ENCODE measurements at regions of chr16 and their contacts with region 1.

Region 1: DNA sequence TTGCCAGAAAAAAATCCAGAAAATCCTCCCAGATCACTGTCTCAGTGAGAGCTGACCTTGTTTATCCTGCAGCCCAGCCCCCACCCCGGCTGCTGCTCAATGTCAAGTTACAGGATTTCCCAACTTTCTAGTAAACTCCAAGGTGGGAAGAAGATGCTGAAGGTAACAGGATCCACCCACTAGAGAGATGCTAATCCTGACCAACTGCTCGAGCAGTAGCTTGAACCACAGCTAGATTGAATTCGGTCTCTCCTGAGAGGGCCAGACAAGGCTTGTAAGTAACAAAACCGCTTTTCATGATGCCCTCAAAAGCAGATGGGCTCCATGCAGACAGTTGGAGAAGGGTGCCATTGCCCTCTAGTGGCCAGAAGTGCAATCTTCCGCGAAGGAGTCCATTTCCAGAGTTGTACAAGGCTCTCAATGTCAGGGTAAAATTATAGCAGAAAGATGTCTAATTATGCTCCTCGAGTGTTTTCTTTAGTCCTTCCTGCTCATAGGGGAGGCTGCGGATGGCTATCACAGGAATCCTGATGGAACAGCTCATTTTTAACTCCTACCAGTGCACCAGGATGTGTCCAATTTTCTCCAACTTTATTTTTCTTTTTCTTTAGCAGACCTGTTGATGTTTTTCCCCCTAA is 3.9 kb downstream of the CDH11 start:
- DNase-seq: peak; percentile 91
- H3K4me3 ChIP-seq: peak overlapping the region; percentile 79
- H3K27ac ChIP-seq: no peak overlapping the region
- H3K4me1 ChIP-seq: peaks cover 33% of the 10 kb centered on the region
- H3K27me3 ChIP-seq: no peaks in the 10 kb centered on the region
- CTCF ChIP-seq: peak; percentile 95

Region 2: GRCh38 chr16:63361032-63361624 is 1756.8 kb before region 1 on chr16:
- CTCF ChIA-PET with region 1: no interaction called
- POLR2A ChIA-PET with region 1: no interaction called
- intact Hi-C with region 1: loop called (anchors 10 kb)
- DNase-seq: peak; percentile 75
- H3K4me3 ChIP-seq: no peak overlapping the region
- H3K27ac ChIP-seq: no peak overlapping the region
- H3K4me1 ChIP-seq: peaks cover 12% of the 10 kb centered on the region
- H3K27me3 ChIP-seq: no peaks in the 10 kb centered on the region
- CTCF ChIP-seq: peak; percentile 89

Region 3: GRCh38 chr16:64089697-64090096 is 1028.2 kb before region 1 on chr16:
- CTCF ChIA-PET with region 1: no interaction called
- POLR2A ChIA-PET with region 1: no interaction called
- intact Hi-C with region 1: loop called (anchors 2 kb)
- DNase-seq: peak; percentile 59
- H3K4me3 ChIP-seq: no peak overlapping the region
- H3K27ac ChIP-seq: no peak overlapping the region
- H3K4me1 ChIP-seq: no peaks in the 10 kb centered on the region
- H3K27me3 ChIP-seq: no peaks in the 10 kb centered on the region
- CTCF ChIP-seq: peak; percentile 73

Region 4: GRCh38 chr16:64991001-64991400 is 126.9 kb before region 1 on chr16:
- CTCF ChIA-PET with region 1: no interaction called
- POLR2A ChIA-PET with region 1: no interaction called
- intact Hi-C with region 1: loop called (anchors 5 kb)
- DNase-seq: peak; percentile 54
- H3K4me3 ChIP-seq: no peak overlapping the region
- H3K27ac ChIP-seq: peak overlapping the region; percentile 66
- H3K4me1 ChIP-seq: peaks cover 65% of the 10 kb centered on the region
- H3K27me3 ChIP-seq: no peaks in the 10 kb centered on the region
- CTCF ChIP-seq: no peak

Region 5: GRCh38 chr16:65070831-65071432 is 47.0 kb before region 1 on chr16:
- CTCF ChIA-PET with region 1: no interaction called
- POLR2A ChIA-PET with region 1: no interaction called
- intact Hi-C with region 1: no loop called
- DNase-seq: peak; percentile 81
- H3K4me3 ChIP-seq: no peak overlapping the region
- H3K27ac ChIP-seq: no peak overlapping the region
- H3K4me1 ChIP-seq: peaks cover 44% of the 10 kb centered on the region
- H3K27me3 ChIP-seq: no peaks in the 10 kb centered on the region
- CTCF ChIP-seq: no peak

Region 6: GRCh38 chr16:65540901-65541300 is 423.0 kb after region 1 on chr16:
- CTCF ChIA-PET with region 1: no interaction called
- POLR2A ChIA-PET with region 1: no interaction called
- intact Hi-C with region 1: loop called (anchors 2 kb)
- DNase-seq: peak; percentile 10
- H3K4me3 ChIP-seq: no peak overlapping the region
- H3K27ac ChIP-seq: peak overlapping the region; percentile 96
- H3K4me1 ChIP-seq: peaks cover 46% of the 10 kb centered on the region
- H3K27me3 ChIP-seq: no peaks in the 10 kb centered on the region
- CTCF ChIP-seq: no peak

Region 7: GRCh38 chr16:66270333-66270927 is 1152.5 kb after region 1 on chr16:
- CTCF ChIA-PET with region 1: no interaction called
- POLR2A ChIA-PET with region 1: no interaction called
- intact Hi-C with region 1: loop called (anchors 2 kb)
- DNase-seq: peak; percentile 90
- H3K4me3 ChIP-seq: no peak overlapping the region
- H3K27ac ChIP-seq: peak overlapping the region; percentile 78
- H3K4me1 ChIP-seq: peaks cover 50% of the 10 kb centered on the region
- H3K27me3 ChIP-seq: no peaks in the 10 kb centered on the region
- CTCF ChIP-seq: peak; percentile 81